T-cell (primary cell): ENCODE measurements at regions of chr4 and their contacts with region 1.

Region 1: GRCh38 chr4:3524920-3525319 is 7.3 kb downstream of the LRPAP1 start:
- DNase-seq: no peak
- ATAC-seq: no peak
- H3K4me3 ChIP-seq: no peak overlapping the region
- H3K4me3 Mint-ChIP-seq: no peak overlapping the region
- H3K27ac ChIP-seq: no peak overlapping the region
- H3K27ac Mint-ChIP-seq: no peak overlapping the region
- H3K4me1 ChIP-seq: peaks cover 0 to 26% of the 10 kb centered on the region in 2 experiments
- H3K4me1 Mint-ChIP-seq: peaks cover 22 to 25% (median 22%) of the 10 kb centered on the region in 3 donors
- H3K27me3 ChIP-seq: no peaks in the 10 kb centered on the region
- H3K27me3 Mint-ChIP-seq: no peaks in the 10 kb centered on the region

Region 2: DNA sequence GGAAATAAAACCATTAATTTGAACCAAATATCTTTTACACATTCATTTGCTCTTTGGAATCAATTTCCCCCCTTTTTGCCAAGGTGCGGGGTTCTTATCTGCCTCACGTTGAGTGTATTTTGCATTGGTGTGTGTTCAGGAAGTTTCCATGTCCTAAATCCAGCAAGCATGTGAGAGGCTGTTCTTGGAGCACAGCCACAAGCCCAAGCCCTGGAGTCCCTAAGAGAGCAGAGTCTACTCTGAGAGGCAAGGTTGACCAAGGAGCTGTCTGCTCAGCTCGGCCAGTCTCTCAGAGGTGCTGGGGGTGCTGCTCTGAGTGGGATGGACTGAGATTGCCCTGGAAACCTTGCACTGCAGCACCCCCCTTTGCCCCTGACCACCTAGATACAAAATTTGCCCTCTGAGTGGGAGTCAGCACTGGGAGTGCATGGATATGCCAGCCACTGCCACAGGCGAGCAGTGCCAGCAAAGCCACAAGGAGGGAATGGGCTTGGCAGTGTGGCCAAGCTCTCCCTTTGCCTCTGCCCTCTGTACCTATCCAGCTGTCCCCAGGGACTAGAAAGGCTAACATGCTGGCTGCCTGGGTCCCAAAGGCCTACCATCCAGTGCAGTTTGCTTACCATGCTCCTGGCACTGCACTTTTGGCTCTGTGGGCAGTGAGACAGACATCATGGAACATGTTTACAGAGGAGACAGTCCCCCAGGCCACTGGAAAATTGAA is 1008.9 kb before region 1 on chr4:
- CTCF ChIA-PET with region 1: no interaction called
- POLR2A ChIA-PET with region 1: interaction called in 1 of 2 experiments, 12 read pairs
- DNase-seq: no peak
- ATAC-seq: peak in 1 of 4 experiments; percentile 17
- H3K4me3 ChIP-seq: no peak overlapping the region
- H3K4me3 Mint-ChIP-seq: no peak overlapping the region
- H3K27ac ChIP-seq: no peak overlapping the region
- H3K27ac Mint-ChIP-seq: peak overlapping the region in 1 of 2 donors; percentile 16
- H3K4me1 ChIP-seq: peaks cover 0 to 11% of the 10 kb centered on the region in 2 experiments
- H3K4me1 Mint-ChIP-seq: peaks cover 0 to 5% (median 2%) of the 10 kb centered on the region in 3 donors
- H3K27me3 ChIP-seq: no peaks in the 10 kb centered on the region
- H3K27me3 Mint-ChIP-seq: no peaks in the 10 kb centered on the region